ENCODE measurements at regions of chr6 and their contacts with region 1.

Region 1: GRCh38 chr6:5143634-5144311 is 58.6 kb downstream of the PPP1R3G start:
- DNase-seq: peak; percentile 77 to 91 (median 82)
- ATAC-seq: peak; percentile 77
- H3K4me3 ChIP-seq: no peak overlapping the region
- H3K4me3 Mint-ChIP-seq: no peak overlapping the region
- H3K27ac ChIP-seq: no peak overlapping the region
- H3K27ac Mint-ChIP-seq: no peak overlapping the region
- H3K4me1 ChIP-seq: no peaks in the 10 kb centered on the region
- H3K4me1 Mint-ChIP-seq: peaks cover 4% of the 10 kb centered on the region
- H3K27me3 ChIP-seq: no peaks in the 10 kb centered on the region
- H3K27me3 Mint-ChIP-seq: no peaks in the 10 kb centered on the region
- CTCF ChIP-seq: peak; percentile 96

Region 2: DNA sequence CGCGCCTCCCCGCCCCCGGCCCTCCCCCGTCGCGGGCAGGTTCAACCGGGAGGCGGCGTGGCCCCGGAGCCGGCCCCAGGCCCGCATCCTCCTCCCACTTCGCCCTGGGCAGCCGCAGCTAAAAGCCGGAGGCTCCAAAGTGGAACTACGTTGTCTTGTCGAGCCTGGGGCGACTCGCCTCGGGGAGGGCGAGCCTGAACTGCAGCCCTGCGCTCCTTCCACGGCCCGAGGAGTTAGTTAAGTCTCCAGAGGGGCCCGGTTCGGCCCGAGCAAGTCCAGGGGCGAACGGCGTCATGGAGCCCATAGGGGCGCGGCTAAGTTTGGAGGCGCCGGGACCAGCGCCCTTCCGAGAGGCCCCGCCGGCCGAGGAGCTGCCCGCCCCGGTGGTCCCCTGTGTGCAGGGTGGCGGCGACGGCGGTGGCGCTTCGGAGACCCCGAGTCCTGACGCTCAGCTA is 58.6 kb before region 1 on chr6 and contains the start of gene PPP1R3G:
- CTCF ChIA-PET with region 1: no interaction called
- POLR2A ChIA-PET with region 1: no interaction called
- intact Hi-C with region 1: no loop called
- DNase-seq: peak in 1 of 14 experiments; percentile 17
- ATAC-seq: no peak
- H3K4me3 ChIP-seq: peak within 1 kb of the TSS; percentile 12
- H3K4me3 Mint-ChIP-seq: no peak within 1 kb of the TSS
- H3K27ac ChIP-seq: no peak within 1 kb of the TSS
- H3K27ac Mint-ChIP-seq: no peak within 1 kb of the TSS
- H3K4me1 ChIP-seq: peaks cover 10% of the 10 kb centered on the region
- H3K4me1 Mint-ChIP-seq: no peaks in the 10 kb centered on the region
- H3K27me3 ChIP-seq: peaks cover 31 to 65% of the 10 kb centered on the region in 2 experiments
- H3K27me3 Mint-ChIP-seq: peaks cover 55% of the 10 kb centered on the region
- CTCF ChIP-seq: no peak
- total RNA-seq, gene PPP1R3G: not detected

Region 3: GRCh38 chr6:5214570-5215052 is 70.8 kb after region 1 on chr6:
- CTCF ChIA-PET with region 1: no interaction called
- POLR2A ChIA-PET with region 1: no interaction called
- intact Hi-C with region 1: loop called in 1 of 2 experiments (anchors 2 kb)
- DNase-seq: peak in 2 of 14 experiments; percentile 30 to 32
- ATAC-seq: no peak
- H3K4me3 ChIP-seq: no peak overlapping the region
- H3K4me3 Mint-ChIP-seq: no peak overlapping the region
- H3K27ac ChIP-seq: no peak overlapping the region
- H3K27ac Mint-ChIP-seq: no peak overlapping the region
- H3K4me1 ChIP-seq: no peaks in the 10 kb centered on the region
- H3K4me1 Mint-ChIP-seq: peaks cover 9% of the 10 kb centered on the region
- H3K27me3 ChIP-seq: no peaks in the 10 kb centered on the region
- H3K27me3 Mint-ChIP-seq: no peaks in the 10 kb centered on the region
- CTCF ChIP-seq: no peak

Region 4: DNA sequence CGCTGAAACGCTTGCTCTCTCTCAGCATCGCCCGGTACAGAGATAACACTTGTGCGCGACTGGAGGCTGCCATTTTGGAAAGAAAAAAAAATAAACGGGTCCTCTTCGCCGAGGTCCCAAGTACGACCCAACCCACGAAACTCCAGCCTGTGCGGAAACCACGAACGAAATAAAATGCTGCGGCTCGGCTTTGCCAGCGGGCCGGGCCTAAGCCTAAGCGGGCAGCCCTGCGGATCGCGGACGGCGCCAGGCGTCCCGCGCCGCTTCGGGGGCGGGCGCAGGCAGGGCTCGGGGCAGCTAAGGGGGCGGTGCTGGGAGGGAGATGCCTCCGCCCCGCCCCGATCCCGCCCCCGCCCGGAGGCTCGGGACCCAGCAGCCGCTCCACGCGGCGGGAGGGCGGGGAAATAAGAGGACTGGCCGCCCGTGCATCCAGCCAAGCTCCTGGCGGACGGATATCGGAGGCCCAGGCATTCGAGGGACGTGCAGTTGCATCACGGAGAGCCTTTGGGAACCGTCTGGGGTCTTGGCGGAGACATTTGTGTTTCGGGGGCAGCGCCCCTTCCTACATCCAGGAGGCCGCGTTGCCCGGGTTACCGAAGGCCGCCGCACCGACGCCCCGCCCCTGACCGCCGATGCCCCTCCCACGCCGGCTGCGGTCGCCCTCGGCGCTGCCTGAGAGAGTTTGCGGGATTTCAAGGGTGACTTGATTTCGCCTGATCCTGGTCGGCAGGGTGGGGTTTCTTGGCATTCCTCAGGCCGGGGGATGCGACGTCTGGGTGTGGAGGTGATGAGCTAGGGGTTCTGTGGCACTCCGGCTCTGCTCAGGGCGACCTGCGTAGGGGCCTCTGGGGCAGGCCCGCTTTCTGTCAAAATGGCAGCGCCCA is 117.1 kb after region 1 on chr6 and contains the starts of genes FARS2 and LYRM4:
- CTCF ChIA-PET with region 1: interaction called, 7 read pairs
- POLR2A ChIA-PET with region 1: interaction called, 5 read pairs
- intact Hi-C with region 1: loop called in 1 of 2 experiments (anchors 2 kb)
- DNase-seq: peak; percentile 86 to 96 (median 89)
- ATAC-seq: peak; percentile 75
- H3K4me3 ChIP-seq: peak within 1 kb of the TSS; percentile 86
- H3K4me3 Mint-ChIP-seq: peak within 1 kb of the TSS; percentile 98
- H3K27ac ChIP-seq: peak within 1 kb of the TSS; percentile 98
- H3K27ac Mint-ChIP-seq: peak within 1 kb of the TSS; percentile 100
- H3K4me1 ChIP-seq: peaks cover 13% of the 10 kb centered on the region
- H3K4me1 Mint-ChIP-seq: peaks cover 38% of the 10 kb centered on the region
- H3K27me3 ChIP-seq: no peaks in the 10 kb centered on the region
- H3K27me3 Mint-ChIP-seq: no peaks in the 10 kb centered on the region
- CTCF ChIP-seq: no peak
- total RNA-seq, gene FARS2: 12.6 to 12.8 TPM
- total RNA-seq, gene LYRM4: 24.8 to 28.1 TPM

Region 5: DNA sequence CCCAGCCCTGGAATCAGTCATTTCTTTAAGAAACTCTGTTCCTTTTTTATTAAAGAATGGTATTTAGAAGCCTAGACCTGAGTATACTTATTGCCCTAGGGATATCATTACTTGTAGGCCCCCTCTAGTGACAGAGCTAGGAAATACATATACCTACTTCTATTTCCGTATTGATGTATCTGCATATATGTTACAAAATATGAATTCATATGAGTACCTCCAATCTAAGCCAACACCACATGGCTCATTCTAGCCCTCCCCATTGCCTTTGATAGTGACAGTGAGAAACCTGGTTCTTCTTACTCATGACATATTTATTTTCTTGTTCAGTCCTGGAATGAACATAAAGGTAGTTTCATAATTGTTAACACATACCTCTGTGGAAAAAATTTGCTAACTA is 254.8 kb after region 1 on chr6:
- CTCF ChIA-PET with region 1: no interaction called
- POLR2A ChIA-PET with region 1: interaction called, 3 read pairs
- intact Hi-C with region 1: loop called (anchors 1 to 2 kb)
- DNase-seq: peak in 3 of 14 experiments; percentile 49 to 59 (median 58)
- ATAC-seq: peak; percentile 75
- H3K4me3 ChIP-seq: no peak overlapping the region
- H3K4me3 Mint-ChIP-seq: no peak overlapping the region
- H3K27ac ChIP-seq: no peak overlapping the region
- H3K27ac Mint-ChIP-seq: no peak overlapping the region
- H3K4me1 ChIP-seq: no peaks in the 10 kb centered on the region
- H3K4me1 Mint-ChIP-seq: peaks cover 5% of the 10 kb centered on the region
- H3K27me3 ChIP-seq: no peaks in the 10 kb centered on the region
- H3K27me3 Mint-ChIP-seq: no peaks in the 10 kb centered on the region
- CTCF ChIP-seq: peak; percentile 76

Region 6: GRCh38 chr6:6547110-6547879 is 1403.5 kb after region 1 on chr6:
- CTCF ChIA-PET with region 1: interaction called, 13 read pairs
- POLR2A ChIA-PET with region 1: interaction called, 7 read pairs
- intact Hi-C with region 1: loop called (anchors 1 kb)
- DNase-seq: peak; percentile 70 to 89 (median 77)
- ATAC-seq: peak; percentile 90
- H3K4me3 ChIP-seq: peak overlapping the region; percentile 51
- H3K4me3 Mint-ChIP-seq: peak overlapping the region; percentile 59
- H3K27ac ChIP-seq: no peak overlapping the region
- H3K27ac Mint-ChIP-seq: no peak overlapping the region
- H3K4me1 ChIP-seq: peaks cover 13% of the 10 kb centered on the region
- H3K4me1 Mint-ChIP-seq: peaks cover 5% of the 10 kb centered on the region
- H3K27me3 ChIP-seq: peaks cover 25 to 34% of the 10 kb centered on the region in 2 experiments
- H3K27me3 Mint-ChIP-seq: peaks cover 54% of the 10 kb centered on the region
- CTCF ChIP-seq: peak; percentile 94